PC-9 (cell line): ENCODE measurements at regions of chr1 and their contacts with region 1.

Region 1: DNA sequence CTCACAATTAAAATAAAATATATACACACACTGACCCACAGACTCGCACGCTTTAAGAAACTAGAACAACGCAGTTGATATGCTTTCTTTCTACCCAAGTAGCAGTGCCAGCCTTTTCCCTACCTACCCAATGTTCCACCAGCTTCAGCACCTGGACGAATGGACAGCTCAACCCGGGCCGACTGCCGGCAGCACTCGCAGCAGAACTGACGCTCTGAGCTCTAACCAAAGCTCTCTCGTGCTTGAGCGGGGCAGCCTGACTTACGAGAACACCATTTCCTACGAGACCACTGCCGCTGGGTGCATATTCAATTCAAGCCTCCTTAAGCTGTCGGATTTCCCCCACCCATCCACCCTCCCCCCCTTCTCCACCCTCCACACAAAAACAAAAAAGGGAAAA is 127.4 kb upstream of the DPYD start:
- DNase-seq: peak in 1 of 2 experiments; percentile 59
- H3K4me3 ChIP-seq: no peak overlapping the region
- H3K27ac ChIP-seq: no peak overlapping the region
- H3K4me1 ChIP-seq: no peaks in the 10 kb centered on the region
- H3K27me3 ChIP-seq: no peaks in the 10 kb centered on the region
- CTCF ChIP-seq: no peak

Region 2: GRCh38 chr1:97875996-97876395 is 172.2 kb before region 1 on chr1:
- CTCF ChIA-PET with region 1: no interaction called
- POLR2A ChIA-PET with region 1: interaction called, 10 read pairs
- intact Hi-C with region 1: no loop called
- DNase-seq: no peak
- H3K4me3 ChIP-seq: no peak overlapping the region
- H3K27ac ChIP-seq: no peak overlapping the region
- H3K4me1 ChIP-seq: no peaks in the 10 kb centered on the region
- H3K27me3 ChIP-seq: no peaks in the 10 kb centered on the region
- CTCF ChIP-seq: no peak

Region 3: GRCh38 chr1:98001764-98002163 is 46.5 kb before region 1 on chr1:
- CTCF ChIA-PET with region 1: interaction called, 3 read pairs
- POLR2A ChIA-PET with region 1: no interaction called
- intact Hi-C with region 1: loop called (anchors 5 kb)
- DNase-seq: no peak
- H3K4me3 ChIP-seq: no peak overlapping the region
- H3K27ac ChIP-seq: no peak overlapping the region
- H3K4me1 ChIP-seq: peaks cover 15% of the 10 kb centered on the region
- H3K27me3 ChIP-seq: no peaks in the 10 kb centered on the region
- CTCF ChIP-seq: peak; percentile 35; the same call in 1 of the 2 replicates